ENCODE measurements at regions of chr20 and their contacts with region 1.

Region 1: GRCh38 chr20:4108495-4109306 is 93.3 kb upstream of the RNF24 start:
- DNase-seq: peak; percentile 91
- ATAC-seq: peak; percentile 88
- H3K4me3 ChIP-seq: peak overlapping the region; percentile 12 to 63 (median 20); a peak in 3 of 6 replicates
- H3K27ac ChIP-seq: no peak overlapping the region
- H3K4me1 ChIP-seq: peaks cover 43% of the 10 kb centered on the region
- H3K27me3 ChIP-seq: peaks cover 7 to 40% of the 10 kb centered on the region in 2 experiments; a peak in 4 of 5 replicates
- CTCF ChIP-seq: peak; percentile 100
- EP300 ChIP-seq: peak; percentile 21 to 75; a peak in 2 of 4 replicates
- POLR2A ChIP-seq: 0 out of 4 replicates have a peak, but pooled peaks of 1 of the 2 experiments have one; percentile 29
- RAD21 ChIP-seq: peak; percentile 100

Region 2: GRCh38 chr20:4135385-4136077 is 26.8 kb after region 1 on chr20:
- CTCF ChIA-PET with region 1: interaction called, 5 read pairs
- POLR2A ChIA-PET with region 1: interaction called, 17 read pairs
- in situ Hi-C with region 1: no loop called
- intact Hi-C with region 1: loop called (anchors 1 kb)
- DNase-seq: peak; percentile 99
- ATAC-seq: peak; percentile 91
- H3K4me3 ChIP-seq: peak overlapping the region; percentile 27 to 59 (median 28); a peak in 5 of 6 replicates
- H3K27ac ChIP-seq: peak overlapping the region; percentile 51
- H3K4me1 ChIP-seq: peaks cover 40% of the 10 kb centered on the region
- H3K27me3 ChIP-seq: no peaks in the 10 kb centered on the region
- CTCF ChIP-seq: 0 out of 2 replicates have a peak, but pooled peaks have one; percentile 7
- EP300 ChIP-seq: peak; percentile 35 to 91; a peak in 3 of 4 replicates
- POLR2A ChIP-seq: peak in 1 of 2 experiments; percentile 46; a peak in 1 of 4 replicates
- RAD21 ChIP-seq: peak; percentile 4; the same call in 1 of the 2 replicates

Region 3: DNA sequence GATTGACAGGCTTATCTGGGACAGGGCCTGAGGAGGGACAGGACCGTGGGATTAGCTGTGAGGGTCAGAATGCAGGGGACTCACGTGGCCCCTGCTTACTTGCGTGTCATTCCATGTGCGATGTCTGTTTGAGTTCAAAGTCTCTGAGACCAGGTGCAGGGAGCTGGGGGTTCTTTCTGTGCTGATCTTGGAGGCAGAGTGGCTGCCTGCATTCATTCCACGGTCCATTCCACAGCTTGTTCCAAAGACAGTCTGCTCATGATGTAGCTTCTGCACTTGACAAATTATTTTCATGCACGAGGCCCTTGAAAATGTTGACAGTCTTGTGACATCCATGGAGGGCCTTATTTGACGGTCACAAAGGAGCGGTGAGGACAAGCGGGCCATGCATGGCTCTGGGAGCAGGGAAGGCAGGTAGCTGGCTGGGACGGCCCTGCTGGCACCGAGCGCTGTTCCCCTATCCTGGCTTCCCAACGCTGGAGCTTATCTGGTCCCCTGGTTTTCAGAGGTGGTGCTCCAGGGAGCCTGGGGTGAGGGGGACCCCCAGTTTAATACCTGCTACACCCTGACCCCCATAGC is 62.9 kb after region 1 on chr20:
- CTCF ChIA-PET with region 1: no interaction called
- POLR2A ChIA-PET with region 1: interaction called, 12 read pairs
- in situ Hi-C with region 1: no loop called
- intact Hi-C with region 1: no loop called
- DNase-seq: peak; percentile 98
- ATAC-seq: peak; percentile 72
- H3K4me3 ChIP-seq: peak overlapping the region; percentile 57 to 77 (median 64)
- H3K27ac ChIP-seq: peak overlapping the region; percentile 91
- H3K4me1 ChIP-seq: peaks cover 58% of the 10 kb centered on the region
- H3K27me3 ChIP-seq: no peaks in the 10 kb centered on the region; a peak in 1 of 5 replicates
- CTCF ChIP-seq: peak; percentile 29
- EP300 ChIP-seq: peak; percentile 77 to 79
- POLR2A ChIP-seq: peak; percentile 82 to 98
- RAD21 ChIP-seq: peak; percentile 37; the same call in 1 of the 2 replicates

Region 4: GRCh38 chr20:4195499-4195898 is 86.8 kb after region 1 on chr20:
- CTCF ChIA-PET with region 1: interaction called, 42 read pairs
- POLR2A ChIA-PET with region 1: no interaction called
- in situ Hi-C with region 1: no loop called
- intact Hi-C with region 1: loop called (anchors 1 kb)
- DNase-seq: peak; percentile 61
- ATAC-seq: peak; percentile 88
- H3K4me3 ChIP-seq: no peak overlapping the region
- H3K27ac ChIP-seq: no peak overlapping the region
- H3K4me1 ChIP-seq: no peaks in the 10 kb centered on the region
- H3K27me3 ChIP-seq: no peaks in the 10 kb centered on the region
- CTCF ChIP-seq: peak; percentile 92
- EP300 ChIP-seq: no peak
- POLR2A ChIP-seq: no peak
- RAD21 ChIP-seq: peak; percentile 87

Region 5: GRCh38 chr20:4592316-4593148 is 483.8 kb after region 1 on chr20:
- CTCF ChIA-PET with region 1: interaction called, 11 read pairs
- POLR2A ChIA-PET with region 1: no interaction called
- in situ Hi-C with region 1: loop called (anchors 10 kb)
- intact Hi-C with region 1: loop called (anchors 2 kb)
- DNase-seq: peak; percentile 81
- ATAC-seq: peak; percentile 96
- H3K4me3 ChIP-seq: peak overlapping the region; percentile 45 to 69 (median 47)
- H3K27ac ChIP-seq: no peak overlapping the region
- H3K4me1 ChIP-seq: peaks cover 22% of the 10 kb centered on the region
- H3K27me3 ChIP-seq: peaks cover 0 to 22% of the 10 kb centered on the region in 2 experiments; a peak in 2 of 5 replicates
- CTCF ChIP-seq: peak; percentile 96
- EP300 ChIP-seq: peak in 1 of 2 experiments; percentile 63; a peak in 2 of 4 replicates
- POLR2A ChIP-seq: no peak
- RAD21 ChIP-seq: peak; percentile 100

Measured in HepG2 (cell line).